IMR-90 (cell line): ENCODE measurements at regions of chr10 and their contacts with region 1.

Region 1: GRCh38 chr10:48279081-48279751 is 4.7 kb upstream of the FRMPD2 start:
- DNase-seq: no peak
- ATAC-seq: no peak
- H3K4me3 ChIP-seq: no peak overlapping the region
- H3K27ac ChIP-seq: no peak overlapping the region
- H3K4me1 ChIP-seq: no peaks in the 10 kb centered on the region
- H3K27me3 ChIP-seq: peaks cover 8% of the 10 kb centered on the region
- CTCF ChIP-seq: no peak
- POLR2A ChIP-seq: no peak
- RAD21 ChIP-seq: no peak

Region 2: DNA sequence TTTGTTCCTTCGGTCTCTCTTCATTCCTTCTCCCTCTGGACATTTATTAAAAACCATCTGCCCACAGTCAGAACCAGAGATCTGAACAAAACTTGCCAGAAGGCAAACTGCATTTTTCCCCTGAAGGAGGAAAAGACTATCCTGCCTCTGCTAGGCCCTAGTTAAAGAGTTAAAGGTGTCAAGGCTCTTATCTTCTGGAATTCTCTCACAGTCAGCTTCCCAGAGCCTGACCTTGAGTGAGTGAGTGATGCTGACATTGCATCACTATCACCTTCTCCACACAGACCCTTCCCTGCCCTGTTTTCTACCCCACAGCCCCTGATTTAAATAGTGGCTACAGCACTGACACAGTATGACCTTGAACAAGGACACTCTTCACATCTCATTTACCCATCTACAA is 21.1 kb before region 1 on chr10:
- CTCF ChIA-PET with region 1: no interaction called
- POLR2A ChIA-PET with region 1: no interaction called
- dilution Hi-C with region 1: no loop called
- in situ Hi-C with region 1: no loop called
- intact Hi-C with region 1: loop called (anchors 2 kb)
- DNase-seq: no peak
- ATAC-seq: no peak
- H3K4me3 ChIP-seq: no peak overlapping the region
- H3K27ac ChIP-seq: no peak overlapping the region
- H3K4me1 ChIP-seq: no peaks in the 10 kb centered on the region
- H3K27me3 ChIP-seq: peaks cover 7% of the 10 kb centered on the region
- CTCF ChIP-seq: no peak
- POLR2A ChIP-seq: no peak
- RAD21 ChIP-seq: no peak